Activated CD8-positive, alpha-beta T cell treated with anti-CD3 and anti-CD28 coated beads, Interleukin-2, amount 10 ng/mL, durations not matched to agents 7 days and 5 days (primary cell): ENCODE measurements at regions of chr6 and their contacts with region 1.

Region 1: GRCh38 chr6:156686995-156687788 is 90.0 kb upstream of the ARID1B start:
- DNase-seq: peak; percentile 70
- ATAC-seq: peak; percentile 97
- H3K4me3 Mint-ChIP-seq: peak overlapping the region; percentile 89
- H3K27ac Mint-ChIP-seq: peak overlapping the region; percentile 90
- H3K4me1 Mint-ChIP-seq: peaks cover 19% of the 10 kb centered on the region
- H3K27me3 Mint-ChIP-seq: peaks cover 9% of the 10 kb centered on the region

Region 2: GRCh38 chr6:156776840-156777576 is 89.8 kb after region 1 on chr6 and contains the start of gene ARID1B:
- CTCF ChIA-PET with region 1: interaction called, 3 read pairs
- POLR2A ChIA-PET with region 1: interaction called, 31 read pairs
- DNase-seq: peak; percentile 82
- ATAC-seq: peak; percentile 54
- H3K4me3 Mint-ChIP-seq: peak within 1 kb of the TSS; percentile 84
- H3K27ac Mint-ChIP-seq: peak within 1 kb of the TSS; percentile 96
- H3K4me1 Mint-ChIP-seq: peaks cover 27% of the 10 kb centered on the region
- H3K27me3 Mint-ChIP-seq: no peaks in the 10 kb centered on the region
- total RNA-seq, gene ARID1B: 60.9 to 62.4 TPM